Tibial artery (tissue), 4 donors: ENCODE measurements at regions of chr15 and their contacts with region 1.

Region 1: DNA sequence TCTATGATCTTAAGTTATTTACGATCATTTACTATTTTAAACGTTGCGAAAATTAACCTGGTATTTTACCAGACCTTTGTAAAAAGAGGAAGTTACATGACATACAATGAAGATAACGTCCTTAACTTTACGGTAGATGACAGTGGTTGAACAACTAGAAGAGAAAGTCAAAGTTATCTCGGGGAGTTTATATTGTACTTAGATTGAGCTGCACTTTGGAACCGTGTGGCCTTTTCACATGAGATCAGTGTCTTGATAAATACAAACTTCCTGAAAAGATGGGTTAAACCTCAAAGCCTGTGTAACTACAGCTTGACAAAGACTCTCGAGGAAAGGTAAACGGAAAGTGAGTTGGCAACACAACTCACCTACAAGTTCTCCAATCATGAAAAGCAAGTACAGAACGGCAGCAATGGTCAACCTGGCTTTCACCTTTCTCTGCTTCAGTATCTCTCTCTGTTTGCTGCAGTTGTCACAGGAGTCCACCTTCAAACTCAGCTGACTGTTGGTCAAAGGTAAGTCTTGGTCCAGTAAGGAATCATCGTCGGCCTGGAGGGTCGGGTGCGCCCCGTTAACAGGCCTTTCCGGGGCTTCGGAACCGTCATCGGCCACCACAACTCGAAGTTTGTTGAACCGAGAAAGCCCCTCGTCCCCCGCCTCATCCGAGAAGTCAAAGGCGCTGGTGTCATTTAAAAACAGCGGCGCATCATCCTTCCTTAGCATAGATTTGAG is 793 bp downstream of the SLC30A4 start:
- DNase-seq: no peak
- H3K4me3 ChIP-seq: peak overlapping the region; percentile 75 to 92
- H3K27ac ChIP-seq: peak overlapping the region; percentile 81 to 83
- H3K4me1 ChIP-seq: peaks cover 0 to 29% (median 20%) of the 10 kb centered on the region in 4 donors
- H3K27me3 ChIP-seq: no peaks in the 10 kb centered on the region
- CTCF ChIP-seq: no peak

Region 2: GRCh38 chr15:45611305-45611704 is 89.5 kb after region 1 on chr15:
- intact Hi-C with region 1: loop called (anchors 2 kb)
- DNase-seq: no peak
- H3K4me3 ChIP-seq: no peak overlapping the region
- H3K27ac ChIP-seq: no peak overlapping the region
- H3K4me1 ChIP-seq: peaks cover 0 to 3% (median 0%) of the 10 kb centered on the region in 4 donors
- H3K27me3 ChIP-seq: no peaks in the 10 kb centered on the region
- CTCF ChIP-seq: no peak